ENCODE measurements at regions of chr12 and their contacts with region 1.

Region 1: DNA sequence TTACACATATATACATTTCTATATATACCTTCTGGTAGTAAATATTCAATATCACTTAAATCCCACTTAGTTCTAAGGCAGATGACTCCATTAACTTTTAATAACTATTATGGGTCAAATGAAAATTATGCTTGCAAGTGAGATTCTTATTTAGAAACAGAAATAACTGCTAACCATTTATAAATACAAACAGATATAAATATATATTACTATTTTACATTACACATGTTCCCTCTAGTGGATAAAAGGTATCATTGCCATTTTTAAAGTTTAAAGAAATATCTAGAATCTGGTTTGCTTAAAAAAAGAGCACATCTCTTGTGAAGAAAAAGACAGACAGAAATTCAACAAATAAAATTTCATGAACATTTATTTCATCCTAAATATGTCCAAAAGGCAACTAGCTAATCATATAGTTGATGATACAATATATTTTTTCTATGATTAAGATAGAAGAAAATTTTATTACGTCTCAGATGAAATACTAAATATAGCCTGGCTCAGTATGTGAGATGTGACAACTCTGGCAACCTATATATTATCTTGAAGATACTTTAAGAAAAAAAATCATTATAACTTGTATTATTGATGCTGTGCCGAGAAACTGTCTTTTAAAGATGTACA is 11.7 kb upstream of the RAD51AP1 start:
- DNase-seq: peak; percentile 5
- ATAC-seq: no peak
- H3K4me3 ChIP-seq: no peak overlapping the region
- H3K27ac ChIP-seq: no peak overlapping the region
- H3K4me1 ChIP-seq: no peaks in the 10 kb centered on the region
- H3K27me3 ChIP-seq: no peaks in the 10 kb centered on the region
- CTCF ChIP-seq: no peak
- EP300 ChIP-seq: no peak
- POLR2A ChIP-seq: no peak
- RAD21 ChIP-seq: no peak

Region 2: GRCh38 chr12:4271717-4272423 is 255.2 kb before region 1 on chr12:
- CTCF ChIA-PET with region 1: no interaction called
- POLR2A ChIA-PET with region 1: no interaction called
- in situ Hi-C with region 1: no loop called
- intact Hi-C with region 1: no loop called
- DNase-seq: no peak
- ATAC-seq: no peak
- H3K4me3 ChIP-seq: no peak overlapping the region
- H3K27ac ChIP-seq: no peak overlapping the region
- H3K4me1 ChIP-seq: peaks cover 53% of the 10 kb centered on the region
- H3K27me3 ChIP-seq: peaks cover 29 to 82% of the 10 kb centered on the region in 2 experiments
- CTCF ChIP-seq: no peak
- EP300 ChIP-seq: no peak
- POLR2A ChIP-seq: no peak
- RAD21 ChIP-seq: no peak

Region 3: DNA sequence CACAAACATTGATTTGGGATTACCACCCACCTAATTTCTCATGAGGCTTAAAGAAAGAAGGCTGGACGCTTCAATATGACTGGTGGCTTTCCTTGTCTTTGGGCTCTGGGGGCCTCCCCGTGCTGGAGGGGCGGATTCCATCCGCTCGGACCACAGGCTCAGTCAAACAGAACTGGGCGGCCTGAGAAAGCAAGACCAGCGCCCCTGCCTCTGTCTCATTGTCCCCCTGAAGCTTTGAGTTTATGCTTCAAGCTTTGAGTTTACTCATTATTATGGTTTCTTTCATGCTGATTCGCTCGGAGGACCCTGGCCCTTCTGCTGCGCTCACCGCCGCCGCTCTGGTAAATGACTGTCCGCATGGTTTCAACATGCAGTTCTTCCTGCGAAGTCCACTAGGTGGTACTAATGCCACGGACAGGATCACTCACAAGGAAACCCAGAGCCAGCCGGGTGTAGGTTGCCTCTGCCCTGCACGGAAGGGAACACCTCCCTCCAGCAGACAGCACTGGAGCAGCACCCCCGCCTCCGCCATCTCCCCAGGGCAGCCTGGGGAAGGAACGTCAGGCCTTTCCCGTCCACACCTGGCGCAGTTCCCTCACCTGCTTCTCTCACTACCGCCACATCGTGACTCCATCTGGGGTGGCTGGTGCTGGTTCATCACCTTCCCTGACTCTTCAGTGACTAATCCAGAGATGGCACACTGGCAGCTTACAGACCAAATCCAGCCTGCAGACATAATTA is 219.3 kb before region 1 on chr12:
- CTCF ChIA-PET with region 1: interaction called, 7 read pairs
- POLR2A ChIA-PET with region 1: no interaction called
- in situ Hi-C with region 1: loop called (anchors 10 kb)
- intact Hi-C with region 1: loop called (anchors 5 kb)
- DNase-seq: peak; percentile 79
- ATAC-seq: peak; percentile 96
- H3K4me3 ChIP-seq: peak overlapping the region; percentile 25 to 67 (median 43); a peak in 5 of 6 replicates
- H3K27ac ChIP-seq: no peak overlapping the region
- H3K4me1 ChIP-seq: peaks cover 34% of the 10 kb centered on the region
- H3K27me3 ChIP-seq: peaks cover 0 to 39% of the 10 kb centered on the region in 2 experiments; a peak in 3 of 5 replicates
- CTCF ChIP-seq: peak; percentile 97
- EP300 ChIP-seq: no peak
- POLR2A ChIP-seq: no peak
- RAD21 ChIP-seq: peak; percentile 81

Region 4: DNA sequence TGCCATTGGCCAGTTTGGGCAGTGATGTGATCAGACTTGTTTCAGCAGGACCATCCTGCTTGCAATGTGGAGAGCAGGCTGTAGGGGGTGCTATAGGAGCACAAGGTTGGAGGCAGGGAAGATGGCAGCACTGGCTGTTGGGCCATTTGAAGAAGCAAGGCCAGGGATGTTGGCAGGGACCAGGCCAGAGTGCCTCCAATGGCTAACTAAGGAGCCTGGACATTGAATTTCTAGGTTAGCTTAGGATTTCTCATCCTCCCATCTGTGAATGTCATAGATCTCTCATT is 171.1 kb before region 1 on chr12:
- CTCF ChIA-PET with region 1: interaction called, 3 read pairs
- POLR2A ChIA-PET with region 1: no interaction called
- in situ Hi-C with region 1: loop called (anchors 10 kb)
- intact Hi-C with region 1: no loop called
- DNase-seq: peak; percentile 28
- ATAC-seq: peak; percentile 50; the same call in 2 of the 3 replicates
- H3K4me3 ChIP-seq: no peak overlapping the region
- H3K27ac ChIP-seq: no peak overlapping the region
- H3K4me1 ChIP-seq: no peaks in the 10 kb centered on the region
- H3K27me3 ChIP-seq: no peaks in the 10 kb centered on the region
- CTCF ChIP-seq: peak; percentile 61
- EP300 ChIP-seq: no peak
- POLR2A ChIP-seq: no peak
- RAD21 ChIP-seq: 0 out of 2 replicates have a peak, but pooled peaks have one; percentile 21

Region 5: GRCh38 chr12:4379405-4379804 is 147.6 kb before region 1 on chr12 and contains the start of gene FGF23:
- CTCF ChIA-PET with region 1: no interaction called
- POLR2A ChIA-PET with region 1: no interaction called
- in situ Hi-C with region 1: no loop called
- intact Hi-C with region 1: no loop called
- DNase-seq: peak; percentile 6
- ATAC-seq: peak; percentile 96
- H3K4me3 ChIP-seq: no peak within 1 kb of the TSS
- H3K27ac ChIP-seq: no peak within 1 kb of the TSS
- H3K4me1 ChIP-seq: peaks cover 24% of the 10 kb centered on the region
- H3K27me3 ChIP-seq: peaks cover 1 to 20% of the 10 kb centered on the region in 2 experiments; a peak in 3 of 5 replicates
- CTCF ChIP-seq: no peak
- EP300 ChIP-seq: no peak
- POLR2A ChIP-seq: no peak
- RAD21 ChIP-seq: no peak
- total RNA-seq, gene FGF23: not detected in 2 replicates

Region 6: GRCh38 chr12:4421590-4422031 is 105.4 kb before region 1 on chr12:
- CTCF ChIA-PET with region 1: interaction called, 37 read pairs
- POLR2A ChIA-PET with region 1: no interaction called
- in situ Hi-C with region 1: loop called (anchors 5 kb)
- intact Hi-C with region 1: loop called (anchors 1 kb)
- DNase-seq: peak; percentile 35
- ATAC-seq: peak; percentile 72
- H3K4me3 ChIP-seq: no peak overlapping the region
- H3K27ac ChIP-seq: no peak overlapping the region
- H3K4me1 ChIP-seq: no peaks in the 10 kb centered on the region
- H3K27me3 ChIP-seq: peaks cover 0 to 31% of the 10 kb centered on the region in 2 experiments; a peak in 3 of 5 replicates
- CTCF ChIP-seq: peak; percentile 67
- EP300 ChIP-seq: no peak
- POLR2A ChIP-seq: no peak
- RAD21 ChIP-seq: no peak

Region 7: GRCh38 chr12:4579305-4580102 is 52.5 kb after region 1 on chr12:
- CTCF ChIA-PET with region 1: no interaction called
- POLR2A ChIA-PET with region 1: no interaction called
- in situ Hi-C with region 1: no loop called
- intact Hi-C with region 1: no loop called
- DNase-seq: peak; percentile 17
- ATAC-seq: peak; percentile 80
- H3K4me3 ChIP-seq: no peak overlapping the region
- H3K27ac ChIP-seq: no peak overlapping the region
- H3K4me1 ChIP-seq: no peaks in the 10 kb centered on the region
- H3K27me3 ChIP-seq: peaks cover 3 to 22% of the 10 kb centered on the region in 2 experiments; a peak in 4 of 5 replicates
- CTCF ChIP-seq: peak; percentile 66
- EP300 ChIP-seq: no peak
- POLR2A ChIP-seq: no peak
- RAD21 ChIP-seq: peak; percentile 24; the same call in 1 of the 2 replicates

Region 8: DNA sequence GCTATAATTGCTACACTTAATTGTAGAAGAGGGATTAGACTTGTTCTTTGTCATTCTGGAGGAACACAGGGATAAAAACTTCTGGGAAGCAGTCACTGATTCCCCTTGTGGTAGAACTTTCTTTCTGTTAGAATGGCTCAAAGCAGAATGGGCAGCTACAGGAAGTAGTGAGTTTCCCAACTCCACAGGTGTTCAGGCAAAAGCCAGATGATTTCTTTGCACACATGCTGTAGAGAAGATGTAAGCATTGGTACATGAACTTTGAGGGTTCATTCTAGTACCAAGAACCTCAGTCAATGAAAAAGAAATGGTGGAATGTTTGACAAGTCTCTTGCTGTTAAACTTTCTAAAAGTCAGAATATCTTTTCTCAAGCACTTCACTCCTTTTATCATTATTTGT is 126.2 kb after region 1 on chr12:
- CTCF ChIA-PET with region 1: no interaction called
- POLR2A ChIA-PET with region 1: no interaction called
- in situ Hi-C with region 1: no loop called
- intact Hi-C with region 1: no loop called
- DNase-seq: no peak
- ATAC-seq: no peak
- H3K4me3 ChIP-seq: no peak overlapping the region
- H3K27ac ChIP-seq: no peak overlapping the region
- H3K4me1 ChIP-seq: peaks cover 28% of the 10 kb centered on the region
- H3K27me3 ChIP-seq: no peaks in the 10 kb centered on the region; a peak in 1 of 5 replicates
- CTCF ChIP-seq: no peak
- EP300 ChIP-seq: no peak
- POLR2A ChIP-seq: no peak
- RAD21 ChIP-seq: no peak

Measured in HepG2 (cell line).